B cell (primary cell): ENCODE measurements at regions of chr14 and their contacts with region 1.

Region 1: DNA sequence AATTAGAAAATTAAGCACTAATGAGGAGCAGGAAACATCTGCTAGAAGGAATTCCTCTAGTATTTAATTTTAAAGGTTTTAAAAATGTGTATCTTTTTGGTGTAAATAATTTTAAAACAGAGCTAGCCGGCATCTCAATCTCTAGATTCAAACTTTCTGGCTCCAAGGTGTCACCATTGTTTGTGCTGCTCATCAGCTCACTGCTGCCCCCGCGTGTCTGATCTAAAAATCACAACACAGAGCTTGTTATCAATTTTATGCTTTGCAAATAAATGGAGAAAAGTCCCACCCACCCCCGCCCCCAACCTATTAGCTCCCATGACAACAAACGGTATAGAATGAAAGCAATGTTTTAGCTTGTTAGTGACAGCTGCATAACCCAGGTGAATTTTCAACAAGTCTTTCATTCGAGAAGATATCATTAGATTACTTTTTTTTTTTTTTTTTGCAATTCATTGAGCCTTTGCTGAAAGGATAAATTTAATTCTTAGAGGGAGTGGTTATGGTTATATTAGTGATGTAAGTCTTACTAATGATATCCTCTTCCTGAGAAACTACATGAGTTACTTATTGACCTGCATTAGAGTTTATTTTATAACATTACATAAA is 11.3 kb upstream of the ABHD12B start:
- DNase-seq: peak; percentile 90
- ATAC-seq: peak; percentile 71
- H3K4me3 ChIP-seq: peak overlapping the region; percentile 58 to 92 (median 69)
- H3K4me3 Mint-ChIP-seq: peak overlapping the region; percentile 95
- H3K27ac ChIP-seq: peak overlapping the region; percentile 34 to 44
- H3K27ac Mint-ChIP-seq: peak overlapping the region; percentile 91
- H3K4me1 ChIP-seq: peaks cover 9 to 14% of the 10 kb centered on the region in 2 donors
- H3K4me1 Mint-ChIP-seq: peaks cover 15% of the 10 kb centered on the region
- H3K27me3 ChIP-seq: no peaks in the 10 kb centered on the region
- H3K27me3 Mint-ChIP-seq: peaks cover 2% of the 10 kb centered on the region
- CTCF ChIP-seq: peak; percentile 87

Region 2: DNA sequence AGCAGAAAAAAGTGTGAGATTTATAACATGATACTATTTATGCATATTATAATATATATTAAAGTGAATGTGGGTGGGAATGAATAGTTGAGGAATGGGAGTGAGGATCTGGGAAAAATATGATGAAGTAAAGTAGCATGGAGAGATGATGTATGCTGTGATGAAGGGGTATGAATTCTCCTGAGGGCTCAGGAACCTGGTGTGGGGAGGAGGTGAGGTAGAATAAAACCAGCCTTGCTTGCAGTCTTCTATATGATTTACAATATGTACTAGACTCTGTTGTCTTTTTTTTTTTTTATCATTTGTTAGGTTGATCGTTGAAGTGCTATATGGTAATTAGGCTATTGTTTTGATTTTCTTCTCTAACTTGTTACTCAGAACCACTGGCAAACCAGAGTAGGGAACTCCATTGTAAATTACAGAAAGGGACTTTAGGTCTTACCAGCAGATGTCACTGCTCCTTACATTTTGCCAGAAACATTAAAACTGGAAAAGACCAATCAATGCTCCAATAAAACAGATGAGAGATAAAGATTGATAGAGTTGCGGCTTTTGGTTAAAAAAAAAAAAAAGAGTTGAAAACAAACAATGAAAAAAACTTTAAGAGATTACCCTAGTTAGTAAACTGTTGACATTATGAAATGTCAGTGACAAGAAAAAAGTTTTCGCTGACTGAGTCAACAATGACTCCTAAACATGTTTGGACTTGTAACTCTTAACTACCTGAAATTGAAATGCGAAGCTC is 260.7 kb before region 1 on chr14:
- CTCF ChIA-PET with region 1: interaction called, 55 read pairs
- POLR2A ChIA-PET with region 1: no interaction called
- intact Hi-C with region 1: loop called (anchors 1 kb)
- DNase-seq: peak; percentile 46
- ATAC-seq: no peak
- H3K4me3 ChIP-seq: no peak overlapping the region
- H3K4me3 Mint-ChIP-seq: no peak overlapping the region
- H3K27ac ChIP-seq: no peak overlapping the region
- H3K27ac Mint-ChIP-seq: no peak overlapping the region
- H3K4me1 ChIP-seq: no peaks in the 10 kb centered on the region
- H3K4me1 Mint-ChIP-seq: no peaks in the 10 kb centered on the region
- H3K27me3 ChIP-seq: no peaks in the 10 kb centered on the region
- H3K27me3 Mint-ChIP-seq: no peaks in the 10 kb centered on the region
- CTCF ChIP-seq: peak; percentile 50

Region 3: DNA sequence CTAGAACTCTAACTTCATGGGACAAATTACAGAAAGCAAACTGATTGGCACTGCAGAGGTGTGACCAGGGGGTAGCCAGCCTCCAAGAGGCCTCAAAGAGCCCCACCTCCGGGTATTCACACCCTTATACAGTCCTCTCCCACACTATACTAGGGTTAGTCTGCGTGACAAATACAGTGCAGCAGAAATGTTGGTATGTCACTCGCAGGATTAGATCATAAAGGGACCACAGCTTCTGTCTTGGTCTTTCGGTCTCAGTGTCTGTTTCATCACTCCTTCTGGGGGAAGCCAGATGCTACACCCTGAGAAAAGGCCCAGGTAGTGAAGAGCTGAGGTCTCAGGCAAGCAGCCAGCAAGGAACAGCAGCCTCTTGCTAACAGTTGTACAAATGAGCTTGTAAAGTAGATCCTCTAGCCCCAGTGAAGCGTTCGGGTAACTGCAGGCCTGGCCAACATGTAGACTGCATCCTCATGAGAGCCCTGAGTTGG is 123.6 kb before region 1 on chr14:
- CTCF ChIA-PET with region 1: interaction called, 23 read pairs
- POLR2A ChIA-PET with region 1: no interaction called
- intact Hi-C with region 1: no loop called
- DNase-seq: no peak
- ATAC-seq: no peak
- H3K4me3 ChIP-seq: no peak overlapping the region
- H3K4me3 Mint-ChIP-seq: no peak overlapping the region
- H3K27ac ChIP-seq: peak overlapping the region; percentile 3 to 18
- H3K27ac Mint-ChIP-seq: no peak overlapping the region
- H3K4me1 ChIP-seq: peaks cover 3 to 4% of the 10 kb centered on the region in 2 donors
- H3K4me1 Mint-ChIP-seq: peaks cover 5% of the 10 kb centered on the region
- H3K27me3 ChIP-seq: no peaks in the 10 kb centered on the region
- H3K27me3 Mint-ChIP-seq: no peaks in the 10 kb centered on the region
- CTCF ChIP-seq: no peak

Region 4: GRCh38 chr14:50778721-50779483 is 81.7 kb before region 1 on chr14:
- CTCF ChIA-PET with region 1: interaction called, 258 read pairs
- POLR2A ChIA-PET with region 1: interaction called, 7 read pairs
- intact Hi-C with region 1: loop called (anchors 1 kb)
- DNase-seq: no peak
- ATAC-seq: no peak
- H3K4me3 ChIP-seq: no peak overlapping the region
- H3K4me3 Mint-ChIP-seq: no peak overlapping the region
- H3K27ac ChIP-seq: no peak overlapping the region
- H3K27ac Mint-ChIP-seq: peak overlapping the region; percentile 62
- H3K4me1 ChIP-seq: peaks cover 18 to 20% of the 10 kb centered on the region in 2 donors
- H3K4me1 Mint-ChIP-seq: peaks cover 24% of the 10 kb centered on the region
- H3K27me3 ChIP-seq: no peaks in the 10 kb centered on the region
- H3K27me3 Mint-ChIP-seq: no peaks in the 10 kb centered on the region
- CTCF ChIP-seq: no peak

Region 5: DNA sequence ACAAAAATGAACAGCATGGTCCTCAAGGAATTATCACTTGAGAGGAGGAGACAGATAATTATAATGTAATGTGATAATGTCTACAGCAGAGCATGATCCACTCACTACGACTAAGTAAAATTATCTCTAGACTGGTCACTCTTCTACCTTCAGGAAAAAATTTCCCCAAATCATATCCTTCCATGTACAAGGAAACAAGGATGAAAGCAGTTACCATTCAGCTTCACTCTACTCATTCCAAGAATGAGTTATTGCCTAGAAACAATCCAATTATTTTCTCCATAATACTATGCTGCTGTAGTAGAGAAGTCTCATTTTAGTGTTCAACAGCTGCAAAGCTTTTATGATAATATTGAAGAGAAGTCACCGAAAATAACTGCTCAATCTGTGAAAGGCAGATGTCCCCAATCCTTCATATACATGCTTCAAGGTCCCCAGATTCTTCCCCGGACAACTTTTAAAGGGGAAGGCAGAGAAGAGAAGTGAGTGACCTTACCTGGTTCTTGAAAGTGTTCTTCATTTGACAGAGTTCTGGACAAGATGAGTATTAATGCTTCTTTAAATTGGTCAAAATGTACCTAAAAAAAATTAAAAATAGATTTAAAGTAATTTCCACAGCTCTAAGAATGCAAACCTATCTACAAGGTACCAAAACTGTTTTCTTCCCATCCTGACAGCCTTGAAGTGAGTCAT is 54.2 kb before region 1 on chr14:
- CTCF ChIA-PET with region 1: interaction called, 19 read pairs
- POLR2A ChIA-PET with region 1: no interaction called
- intact Hi-C with region 1: no loop called
- DNase-seq: no peak
- ATAC-seq: no peak
- H3K4me3 ChIP-seq: no peak overlapping the region
- H3K4me3 Mint-ChIP-seq: no peak overlapping the region
- H3K27ac ChIP-seq: no peak overlapping the region
- H3K27ac Mint-ChIP-seq: no peak overlapping the region
- H3K4me1 ChIP-seq: peaks cover 7 to 13% of the 10 kb centered on the region in 2 donors
- H3K4me1 Mint-ChIP-seq: peaks cover 41% of the 10 kb centered on the region
- H3K27me3 ChIP-seq: no peaks in the 10 kb centered on the region
- H3K27me3 Mint-ChIP-seq: no peaks in the 10 kb centered on the region
- CTCF ChIP-seq: no peak

Region 6: GRCh38 chr14:50839048-50839447 is 21.5 kb before region 1 on chr14:
- CTCF ChIA-PET with region 1: interaction called, 20 read pairs
- POLR2A ChIA-PET with region 1: no interaction called
- intact Hi-C with region 1: loop called (anchors 1 kb)
- DNase-seq: no peak
- ATAC-seq: no peak
- H3K4me3 ChIP-seq: no peak overlapping the region
- H3K4me3 Mint-ChIP-seq: no peak overlapping the region
- H3K27ac ChIP-seq: no peak overlapping the region
- H3K27ac Mint-ChIP-seq: no peak overlapping the region
- H3K4me1 ChIP-seq: peaks cover 27 to 28% of the 10 kb centered on the region in 2 donors
- H3K4me1 Mint-ChIP-seq: peaks cover 40% of the 10 kb centered on the region
- H3K27me3 ChIP-seq: no peaks in the 10 kb centered on the region
- H3K27me3 Mint-ChIP-seq: no peaks in the 10 kb centered on the region
- CTCF ChIP-seq: no peak

Region 7: DNA sequence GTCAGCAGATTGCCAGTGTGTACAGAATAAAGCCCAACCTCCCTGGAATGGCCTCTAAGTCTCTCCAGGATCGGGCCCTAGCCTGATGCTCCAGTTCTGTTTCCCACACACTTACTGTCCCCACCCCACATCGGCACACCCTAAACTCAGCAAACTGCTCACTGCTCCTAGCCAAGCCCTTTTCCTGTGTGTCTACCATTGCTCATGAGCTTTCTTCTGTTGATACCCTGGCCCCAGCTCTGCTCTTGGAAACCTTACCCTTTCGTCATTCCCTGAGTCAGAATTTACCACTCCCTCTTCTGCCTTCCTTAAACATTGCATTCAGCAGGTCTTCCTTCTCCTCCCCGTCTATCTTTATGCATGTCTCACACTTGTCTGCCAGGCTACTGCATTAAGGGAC is 538.3 kb after region 1 on chr14:
- CTCF ChIA-PET with region 1: no interaction called
- POLR2A ChIA-PET with region 1: no interaction called
- intact Hi-C with region 1: no loop called
- DNase-seq: no peak
- ATAC-seq: no peak
- H3K4me3 ChIP-seq: no peak overlapping the region
- H3K4me3 Mint-ChIP-seq: no peak overlapping the region
- H3K27ac ChIP-seq: no peak overlapping the region
- H3K27ac Mint-ChIP-seq: no peak overlapping the region
- H3K4me1 ChIP-seq: no peaks in the 10 kb centered on the region
- H3K4me1 Mint-ChIP-seq: no peaks in the 10 kb centered on the region
- H3K27me3 ChIP-seq: peaks cover 0 to 6% (median 0%) of the 10 kb centered on the region in 4 experiments
- H3K27me3 Mint-ChIP-seq: peaks cover 18% of the 10 kb centered on the region
- CTCF ChIP-seq: no peak